ENCODE measurements at regions of chr15 and their contacts with region 1.

Region 1: DNA sequence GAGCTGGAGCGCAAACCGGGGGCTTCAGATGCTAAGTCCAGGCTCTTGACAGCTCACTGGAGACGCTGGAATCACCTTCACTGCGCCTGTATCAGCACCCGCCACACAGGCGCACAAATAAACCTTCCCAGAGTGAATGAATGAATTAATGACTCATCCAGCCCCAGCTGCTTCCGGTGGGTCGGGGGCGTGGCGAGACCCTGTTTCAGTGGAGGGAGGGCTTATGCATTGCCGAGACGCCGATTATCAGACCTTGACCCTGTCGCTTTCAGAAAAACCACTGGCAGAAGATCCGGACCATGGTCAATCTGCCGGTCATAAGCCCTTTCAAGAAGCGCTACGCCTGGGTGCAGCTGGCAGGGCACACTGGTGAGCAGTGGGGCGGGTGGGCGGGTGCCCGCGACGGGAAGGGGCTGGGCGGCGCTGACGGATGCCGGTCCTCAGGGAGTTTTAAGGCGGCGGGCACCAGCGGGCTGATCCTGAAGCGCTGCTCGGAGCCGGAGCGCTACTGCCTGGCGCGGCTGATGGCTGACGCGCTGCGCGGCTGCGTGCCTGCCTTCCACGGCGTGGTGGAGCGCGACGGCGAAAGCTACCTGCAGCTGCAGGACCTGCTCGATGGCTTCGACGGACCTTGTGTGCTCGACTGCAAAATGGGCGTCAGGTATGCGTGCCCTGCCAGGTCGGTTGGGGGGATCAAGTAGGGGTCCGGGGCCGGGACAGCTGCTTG is 7.7 kb downstream of the ITPKA start:
- DNase-seq: peak in 3 of 5 donors; percentile 37 to 65 (median 39)
- H3K4me3 ChIP-seq: peak overlapping the region in 1 of 2 donors; percentile 50
- H3K4me3 Mint-ChIP-seq: peak overlapping the region; percentile 73 to 84 (median 78)
- H3K27ac ChIP-seq: no peak overlapping the region
- H3K27ac Mint-ChIP-seq: peak overlapping the region in 4 of 7 donors; percentile 35 to 57 (median 45)
- H3K4me1 ChIP-seq: peaks cover 19% of the 10 kb centered on the region
- H3K4me1 Mint-ChIP-seq: peaks cover 5 to 34% (median 10%) of the 10 kb centered on the region in 4 donors
- H3K27me3 ChIP-seq: peaks cover 9% of the 10 kb centered on the region
- H3K27me3 Mint-ChIP-seq: peaks cover 18 to 29% of the 10 kb centered on the region in 2 donors

Region 2: DNA sequence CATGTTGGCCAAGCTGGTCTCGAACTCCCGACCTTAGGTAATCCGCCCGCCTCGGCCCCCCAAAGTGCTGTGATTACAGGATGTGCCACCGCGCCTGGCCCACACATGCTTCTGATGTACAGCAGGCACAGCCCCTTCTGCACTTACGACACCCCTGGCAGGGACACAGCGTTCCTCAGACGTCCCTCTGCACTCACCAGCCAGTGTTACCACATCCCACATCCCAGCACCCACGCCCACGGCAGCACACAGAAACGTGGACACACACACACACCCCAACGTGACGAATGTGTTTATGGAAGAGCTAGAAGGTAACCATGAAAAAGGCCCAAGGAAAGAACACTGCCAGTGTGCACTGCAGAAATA is 43.3 kb after region 1 on chr15:
- CTCF ChIA-PET with region 1: no interaction called
- POLR2A ChIA-PET with region 1: no interaction called
- intact Hi-C with region 1: loop called (anchors 5 kb)
- DNase-seq: peak in 2 of 5 donors; percentile 7 to 17
- H3K4me3 ChIP-seq: peak overlapping the region in 1 of 2 donors; percentile 86
- H3K4me3 Mint-ChIP-seq: peak overlapping the region; percentile 94 to 97 (median 95)
- H3K27ac ChIP-seq: no peak overlapping the region
- H3K27ac Mint-ChIP-seq: peak overlapping the region; percentile 88 to 98 (median 95)
- H3K4me1 ChIP-seq: peaks cover 12% of the 10 kb centered on the region
- H3K4me1 Mint-ChIP-seq: peaks cover 10 to 27% (median 17%) of the 10 kb centered on the region in 4 donors
- H3K27me3 ChIP-seq: no peaks in the 10 kb centered on the region
- H3K27me3 Mint-ChIP-seq: no peaks in the 10 kb centered on the region

Region 3: GRCh38 chr15:41730543-41730942 is 229.2 kb after region 1 on chr15:
- CTCF ChIA-PET with region 1: no interaction called
- POLR2A ChIA-PET with region 1: no interaction called
- intact Hi-C with region 1: no loop called
- DNase-seq: no peak
- H3K4me3 ChIP-seq: no peak overlapping the region
- H3K4me3 Mint-ChIP-seq: no peak overlapping the region
- H3K27ac ChIP-seq: no peak overlapping the region
- H3K27ac Mint-ChIP-seq: peak overlapping the region in 2 of 7 donors; percentile 10 to 24
- H3K4me1 ChIP-seq: no peaks in the 10 kb centered on the region
- H3K4me1 Mint-ChIP-seq: peaks cover 0 to 4% (median under 1%) of the 10 kb centered on the region in 4 donors
- H3K27me3 ChIP-seq: no peaks in the 10 kb centered on the region
- H3K27me3 Mint-ChIP-seq: no peaks in the 10 kb centered on the region